Dendritic cell treated with granulocyte-macrophage colony-stimulating factor and Interleukin-4, amounts not matched to agents 40 ng/mL and 50 ng/mL, for 4 days (primary cell): ENCODE measurements at regions of chr2 and their contacts with region 1.

Region 1: DNA sequence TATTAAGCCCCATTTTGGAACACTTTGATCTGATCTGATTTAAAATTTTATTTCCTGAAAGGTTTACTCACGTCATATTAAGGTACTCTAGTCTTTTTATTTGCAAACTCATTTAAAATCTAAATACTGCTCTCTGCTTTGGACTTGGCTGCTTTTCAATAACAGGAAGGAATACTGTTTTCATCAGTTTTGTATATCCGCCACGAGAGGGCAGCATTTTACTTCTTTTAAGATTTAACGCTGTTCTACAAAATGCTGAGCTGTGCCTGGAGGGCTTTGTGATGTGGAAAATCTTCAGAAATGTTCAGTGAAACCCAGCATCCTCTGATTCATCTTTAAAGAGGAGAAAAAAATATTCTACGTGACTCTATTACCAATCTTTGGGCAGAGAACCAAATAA is 37.5 kb upstream of the SLC38A11 start:
- H3K4me3 Mint-ChIP-seq: no peak overlapping the region
- H3K27ac Mint-ChIP-seq: no peak overlapping the region
- H3K4me1 Mint-ChIP-seq: peaks cover 5% of the 10 kb centered on the region
- H3K27me3 Mint-ChIP-seq: no peaks in the 10 kb centered on the region

Region 2: DNA sequence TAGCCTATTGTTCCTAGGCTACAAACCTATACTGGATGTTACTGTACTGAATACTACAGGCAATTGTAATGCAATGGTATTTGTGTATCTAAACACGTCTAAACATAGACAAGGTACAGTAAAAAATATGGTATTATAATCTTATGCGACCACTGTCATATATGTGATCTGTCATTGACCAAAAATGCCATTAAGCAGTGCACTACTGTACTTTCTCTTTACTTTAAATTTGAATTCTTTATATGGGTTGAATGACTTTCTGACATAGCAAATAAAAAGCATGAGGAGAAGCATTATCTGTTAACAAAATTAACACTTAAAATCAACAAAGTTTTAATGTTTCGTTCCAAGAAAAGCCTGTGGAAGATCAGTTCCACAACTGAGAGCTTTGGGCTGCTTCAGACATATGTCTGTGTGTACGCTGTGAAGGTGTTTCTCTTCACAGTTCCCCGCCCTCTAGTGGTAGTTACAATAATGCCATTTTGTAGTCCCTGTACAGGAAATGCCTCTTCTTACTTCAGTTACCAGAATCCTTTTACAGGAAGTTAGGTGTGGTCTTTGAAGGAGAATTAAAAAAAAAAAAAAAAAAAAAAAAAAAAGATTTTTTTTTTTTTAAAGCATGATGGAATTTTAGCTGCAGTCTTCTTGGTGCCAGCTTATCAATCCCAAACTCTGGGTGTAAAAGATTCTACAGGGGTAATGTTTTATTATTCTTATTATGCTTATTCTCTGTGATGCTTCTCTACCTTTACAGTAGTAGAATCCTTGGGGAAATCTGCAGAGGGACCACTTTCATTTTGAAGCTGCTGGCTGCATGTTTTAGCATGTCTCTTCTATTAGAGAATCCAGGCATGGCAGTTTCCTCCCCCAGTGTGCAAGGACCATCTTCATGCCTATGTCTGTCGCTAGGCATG is 300.9 kb after region 1 on chr2:
- intact Hi-C with region 1: loop called (anchors 1 kb)
- H3K4me3 Mint-ChIP-seq: no peak overlapping the region
- H3K27ac Mint-ChIP-seq: no peak overlapping the region
- H3K4me1 Mint-ChIP-seq: no peaks in the 10 kb centered on the region
- H3K27me3 Mint-ChIP-seq: no peaks in the 10 kb centered on the region

Region 3: DNA sequence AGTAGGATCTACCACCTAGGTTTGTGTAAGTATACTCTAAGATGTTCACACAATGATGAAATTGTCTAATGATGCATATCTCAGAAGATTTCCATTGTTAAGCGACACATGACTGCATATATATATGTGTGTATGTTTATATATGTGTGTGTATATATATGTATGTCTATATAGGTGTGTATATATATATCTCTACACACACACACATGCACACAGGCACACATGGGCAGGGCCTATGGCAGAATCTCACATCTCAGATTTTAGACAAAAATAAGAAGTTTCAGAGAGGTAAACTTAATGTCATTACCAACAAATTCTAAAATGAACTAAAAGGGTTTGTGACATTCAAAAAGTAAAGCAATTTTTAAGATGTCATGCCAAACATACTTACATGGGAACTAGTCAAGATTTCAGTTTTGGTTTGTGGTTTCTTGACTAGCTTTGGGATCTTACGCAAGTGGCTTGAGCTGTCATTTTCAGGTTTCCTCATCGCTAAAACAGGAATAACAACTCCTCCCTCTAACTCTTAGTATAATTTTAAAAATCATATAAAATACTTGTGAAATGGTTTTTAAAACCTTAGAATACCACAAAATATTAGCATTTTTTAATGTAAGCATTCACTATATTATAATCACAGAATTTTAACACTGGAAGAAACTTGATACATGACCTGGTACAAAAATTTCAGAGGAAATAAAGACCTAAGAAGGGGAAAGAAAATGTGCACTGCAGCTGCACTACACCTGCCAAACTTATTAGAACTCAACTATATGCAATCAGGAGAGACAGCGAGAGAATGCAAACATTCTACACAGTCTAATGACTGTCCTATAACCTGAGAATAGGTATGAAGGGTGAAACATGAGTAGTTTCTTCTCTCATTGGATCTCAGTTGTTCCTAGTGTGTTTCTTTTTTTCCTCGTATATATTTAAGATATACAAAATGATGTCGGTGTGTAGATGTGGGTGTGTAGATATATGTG is 885.0 kb after region 1 on chr2:
- intact Hi-C with region 1: no loop called
- H3K4me3 Mint-ChIP-seq: no peak overlapping the region
- H3K27ac Mint-ChIP-seq: no peak overlapping the region
- H3K4me1 Mint-ChIP-seq: peaks cover 14% of the 10 kb centered on the region
- H3K27me3 Mint-ChIP-seq: no peaks in the 10 kb centered on the region